H1 (cell line): ENCODE measurements at regions of chr12 and their contacts with region 1.

Region 1: GRCh38 chr12:92649511-92650227 is 53.1 kb upstream of the PLEKHG7 start:
- DNase-seq: peak; percentile 33 to 51
- H3K4me3 ChIP-seq: no peak overlapping the region
- H3K27ac ChIP-seq: no peak overlapping the region
- H3K4me1 ChIP-seq: peaks cover 2 to 8% (median 4%) of the 10 kb centered on the region in 4 experiments; a peak in 6 of 7 replicates
- H3K27me3 ChIP-seq: no peaks in the 10 kb centered on the region
- CTCF ChIP-seq: peak; percentile 14 to 78 (median 70)
- EP300 ChIP-seq: no peak
- POLR2A ChIP-seq: no peak
- RAD21 ChIP-seq: peak; percentile 90 to 94

Region 2: GRCh38 chr12:92444763-92445162 is 204.9 kb before region 1 on chr12:
- CTCF ChIA-PET with region 1: no interaction called
- POLR2A ChIA-PET with region 1: no interaction called
- DNase-seq: no peak
- H3K4me3 ChIP-seq: no peak overlapping the region
- H3K27ac ChIP-seq: no peak overlapping the region
- H3K4me1 ChIP-seq: no peaks in the 10 kb centered on the region
- H3K27me3 ChIP-seq: no peaks in the 10 kb centered on the region
- CTCF ChIP-seq: no peak
- EP300 ChIP-seq: no peak
- POLR2A ChIP-seq: no peak
- RAD21 ChIP-seq: no peak

Region 3: DNA sequence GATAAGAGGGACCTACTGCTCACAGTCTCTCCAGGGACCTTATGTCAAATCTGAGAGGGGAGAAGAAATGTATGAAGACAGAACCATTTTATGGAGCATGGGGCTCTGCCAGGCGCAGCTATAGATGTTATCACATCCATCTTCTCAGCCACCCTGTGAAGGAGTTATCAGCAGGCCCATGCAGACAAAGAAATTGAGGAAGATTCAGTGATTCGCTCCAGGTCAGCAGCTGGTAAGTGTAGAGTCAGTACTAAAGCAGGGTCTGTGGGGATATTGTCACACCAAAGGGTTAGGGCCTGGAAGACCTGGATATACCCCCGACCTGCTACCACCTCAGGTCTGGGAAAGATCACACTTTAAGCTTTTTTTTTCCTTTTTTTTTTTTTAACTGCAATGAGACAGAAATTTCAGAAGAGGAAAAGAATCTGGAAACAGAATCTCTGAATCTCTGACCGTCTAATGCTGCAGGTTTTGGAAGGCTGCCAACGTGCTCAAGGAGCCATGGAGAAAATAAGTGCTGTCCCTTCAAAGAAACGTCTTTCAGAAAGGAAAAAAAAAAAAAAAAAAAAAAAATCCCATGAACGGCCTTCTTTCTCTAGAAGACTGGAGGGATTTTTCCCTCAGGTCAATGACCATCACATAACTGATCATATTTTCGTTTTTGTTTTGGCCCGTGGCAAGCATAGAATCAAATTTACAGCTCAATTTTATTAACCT is 20.2 kb before region 1 on chr12:
- CTCF ChIA-PET with region 1: interaction called, 10 read pairs
- POLR2A ChIA-PET with region 1: no interaction called
- DNase-seq: no peak
- H3K4me3 ChIP-seq: no peak overlapping the region
- H3K27ac ChIP-seq: no peak overlapping the region
- H3K4me1 ChIP-seq: no peaks in the 10 kb centered on the region
- H3K27me3 ChIP-seq: no peaks in the 10 kb centered on the region
- CTCF ChIP-seq: no peak
- EP300 ChIP-seq: no peak
- POLR2A ChIP-seq: no peak
- RAD21 ChIP-seq: no peak